Heart left ventricle (tissue), 16 donors: ENCODE measurements at regions of chr4 and their contacts with region 1.

Region 1: GRCh38 chr4:17324386-17324830 is 187.5 kb downstream of the QDPR start:
- DNase-seq: peak in 3 of 5 donors; percentile 30 to 61 (median 46)
- ATAC-seq: peak; percentile 26 to 76 (median 60)
- H3K4me3 ChIP-seq: peak overlapping the region in 1 of 12 donors; percentile 1
- H3K27ac ChIP-seq: no peak overlapping the region
- H3K4me1 ChIP-seq: peaks cover 0 to 15% (median 10%) of the 10 kb centered on the region in 12 donors
- H3K27me3 ChIP-seq: no peaks in the 10 kb centered on the region
- CTCF ChIP-seq: peak; percentile 50 to 81 (median 75)
- POLR2A ChIP-seq: no peak

Region 2: GRCh38 chr4:16450724-16451123 is 873.7 kb before region 1 on chr4:
- intact Hi-C with region 1: loop called in 4 of 10 experiments (anchors 10 kb)
- DNase-seq: no peak
- ATAC-seq: no peak
- H3K4me3 ChIP-seq: no peak overlapping the region
- H3K27ac ChIP-seq: no peak overlapping the region
- H3K4me1 ChIP-seq: no peaks in the 10 kb centered on the region
- H3K27me3 ChIP-seq: no peaks in the 10 kb centered on the region
- CTCF ChIP-seq: peak in 9 of 12 donors; percentile 12 to 41 (median 32)
- POLR2A ChIP-seq: no peak

Region 3: GRCh38 chr4:16642895-16643294 is 681.5 kb before region 1 on chr4:
- intact Hi-C with region 1: loop called in 1 of 10 experiments (anchors 10 kb)
- DNase-seq: no peak
- ATAC-seq: no peak
- H3K4me3 ChIP-seq: no peak overlapping the region
- H3K27ac ChIP-seq: no peak overlapping the region
- H3K4me1 ChIP-seq: peaks cover 0 to 11% (median 0%) of the 10 kb centered on the region in 12 donors
- H3K27me3 ChIP-seq: no peaks in the 10 kb centered on the region
- CTCF ChIP-seq: peak in 1 of 12 donors; percentile 14
- POLR2A ChIP-seq: no peak

Region 4: GRCh38 chr4:16794816-16795445 is 529.5 kb before region 1 on chr4:
- intact Hi-C with region 1: loop called in 9 of 10 experiments (anchors 2 to 10 kb)
- DNase-seq: peak in 4 of 5 donors; percentile 56 to 71 (median 59)
- ATAC-seq: peak in 3 of 4 donors; percentile 52 to 74 (median 62)
- H3K4me3 ChIP-seq: no peak overlapping the region
- H3K27ac ChIP-seq: peak overlapping the region in 2 of 12 donors; percentile 35 to 38
- H3K4me1 ChIP-seq: peaks cover 0 to 23% (median 1%) of the 10 kb centered on the region in 12 donors
- H3K27me3 ChIP-seq: no peaks in the 10 kb centered on the region
- CTCF ChIP-seq: peak; percentile 69 to 90 (median 79)
- POLR2A ChIP-seq: no peak

Region 5: GRCh38 chr4:17168571-17168970 is 155.8 kb before region 1 on chr4:
- intact Hi-C with region 1: loop called in 8 of 10 experiments (anchors 5 to 10 kb)
- DNase-seq: peak in 3 of 5 donors; percentile 32 to 64 (median 38)
- ATAC-seq: peak; percentile 36 to 74 (median 54)
- H3K4me3 ChIP-seq: no peak overlapping the region
- H3K27ac ChIP-seq: peak overlapping the region in 8 of 12 donors; percentile 13 to 69 (median 32)
- H3K4me1 ChIP-seq: peaks cover 0 to 36% (median 26%) of the 10 kb centered on the region in 12 donors
- H3K27me3 ChIP-seq: no peaks in the 10 kb centered on the region
- CTCF ChIP-seq: no peak
- POLR2A ChIP-seq: no peak